ENCODE measurements at regions of chr12 and their contacts with region 1.

Region 1: GRCh38 chr12:118061011-118061875 is at the start of gene WSB2:
- DNase-seq: peak in 1 of 2 experiments; percentile 70
- H3K4me3 ChIP-seq: peak within 1 kb of the TSS; percentile 87 to 93 (median 91)
- H3K27ac ChIP-seq: peak within 1 kb of the TSS; percentile 85
- H3K4me1 ChIP-seq: peaks cover 3 to 10% (median 7%) of the 10 kb centered on the region in 4 experiments; a peak in 6 of 7 replicates
- H3K27me3 ChIP-seq: no peaks in the 10 kb centered on the region
- CTCF ChIP-seq: no peak
- EP300 ChIP-seq: no peak
- POLR2A ChIP-seq: peak in 1 of 2 experiments; percentile 5; a peak in 1 of 3 replicates
- RAD21 ChIP-seq: no peak
- total RNA-seq, gene WSB2: 58.2 and 70.0 TPM in 2 replicates

Region 2: GRCh38 chr12:118073768-118074167 is 12.5 kb after region 1 on chr12:
- CTCF ChIA-PET with region 1: interaction called, 7 read pairs
- POLR2A ChIA-PET with region 1: interaction called, 106 read pairs
- DNase-seq: no peak
- H3K4me3 ChIP-seq: no peak overlapping the region
- H3K27ac ChIP-seq: no peak overlapping the region
- H3K4me1 ChIP-seq: no peaks in the 10 kb centered on the region
- H3K27me3 ChIP-seq: no peaks in the 10 kb centered on the region
- CTCF ChIP-seq: no peak
- EP300 ChIP-seq: no peak
- POLR2A ChIP-seq: no peak
- RAD21 ChIP-seq: no peak

Region 3: DNA sequence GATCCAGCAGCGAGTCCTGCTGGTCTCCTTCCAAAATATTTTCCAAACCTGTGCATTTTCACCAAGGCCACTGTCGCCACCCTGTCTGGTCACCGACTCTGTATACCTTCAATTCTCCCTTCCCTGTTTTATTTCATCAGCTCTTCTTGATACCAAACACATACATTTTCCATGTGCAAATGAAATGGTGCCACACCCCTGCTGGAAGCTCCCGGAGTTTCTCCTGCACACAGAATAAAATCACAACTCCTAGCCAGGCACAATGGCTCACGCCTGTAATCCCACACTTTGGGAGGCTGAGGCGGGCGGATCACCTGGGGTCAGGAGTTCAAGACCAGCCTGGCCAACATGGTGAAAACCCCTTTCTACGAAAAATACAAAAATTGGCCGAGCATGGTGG is 28.5 kb after region 1 on chr12:
- CTCF ChIA-PET with region 1: interaction called, 6 read pairs
- POLR2A ChIA-PET with region 1: interaction called, 49 read pairs
- DNase-seq: no peak
- H3K4me3 ChIP-seq: no peak overlapping the region
- H3K27ac ChIP-seq: no peak overlapping the region
- H3K4me1 ChIP-seq: no peaks in the 10 kb centered on the region
- H3K27me3 ChIP-seq: no peaks in the 10 kb centered on the region
- CTCF ChIP-seq: no peak
- EP300 ChIP-seq: no peak
- POLR2A ChIP-seq: 0 out of 3 replicates have a peak, but pooled peaks of 1 of the 2 experiments have one; percentile 25
- RAD21 ChIP-seq: no peak

Region 4: GRCh38 chr12:118120579-118121363 is 59.5 kb after region 1 on chr12:
- CTCF ChIA-PET with region 1: interaction called, 7 read pairs
- POLR2A ChIA-PET with region 1: interaction called, 41 read pairs
- DNase-seq: peak; percentile 77 to 79
- H3K4me3 ChIP-seq: peak overlapping the region in 2 of 4 experiments; percentile 32 to 43; a peak in 3 of 8 replicates
- H3K27ac ChIP-seq: peak overlapping the region; percentile 86
- H3K4me1 ChIP-seq: peaks cover 2 to 12% (median 8%) of the 10 kb centered on the region in 4 experiments
- H3K27me3 ChIP-seq: no peaks in the 10 kb centered on the region
- CTCF ChIP-seq: peak; percentile 47 to 52 (median 47)
- EP300 ChIP-seq: no peak
- POLR2A ChIP-seq: 0 out of 3 replicates have a peak, but pooled peaks of 1 of the 2 experiments have one; percentile 14
- RAD21 ChIP-seq: peak; percentile 60 to 62

Region 5: GRCh38 chr12:118164798-118165486 is 103.7 kb after region 1 on chr12:
- CTCF ChIA-PET with region 1: interaction called, 18 read pairs
- POLR2A ChIA-PET with region 1: interaction called, 4 read pairs
- DNase-seq: no peak
- H3K4me3 ChIP-seq: no peak overlapping the region
- H3K27ac ChIP-seq: no peak overlapping the region
- H3K4me1 ChIP-seq: peaks cover 0 to 3% (median 0%) of the 10 kb centered on the region in 4 experiments; a peak in 1 of 7 replicates
- H3K27me3 ChIP-seq: no peaks in the 10 kb centered on the region
- CTCF ChIP-seq: peak; percentile 32 to 67 (median 65)
- EP300 ChIP-seq: no peak
- POLR2A ChIP-seq: no peak
- RAD21 ChIP-seq: peak; percentile 88 to 90

Region 6: GRCh38 chr12:118206107-118206412 is 144.8 kb after region 1 on chr12:
- CTCF ChIA-PET with region 1: no interaction called
- POLR2A ChIA-PET with region 1: no interaction called
- DNase-seq: no peak
- H3K4me3 ChIP-seq: no peak overlapping the region
- H3K27ac ChIP-seq: no peak overlapping the region
- H3K4me1 ChIP-seq: no peaks in the 10 kb centered on the region
- H3K27me3 ChIP-seq: no peaks in the 10 kb centered on the region
- CTCF ChIP-seq: no peak
- EP300 ChIP-seq: no peak
- POLR2A ChIP-seq: no peak
- RAD21 ChIP-seq: no peak

Measured in H1 (cell line).